Testis (tissue), 5 donors: ENCODE measurements at regions of chr18 and their contacts with region 1.

Region 1: GRCh38 chr18:48663931-48664847 is 125.4 kb downstream of the CTIF start:
- DNase-seq: peak; percentile 79
- H3K4me3 ChIP-seq: no peak overlapping the region
- H3K27ac ChIP-seq: no peak overlapping the region
- H3K4me1 ChIP-seq: peaks cover 13% of the 10 kb centered on the region
- H3K27me3 ChIP-seq: no peaks in the 10 kb centered on the region
- CTCF ChIP-seq: peak; percentile 82 to 88 (median 82)
- POLR2A ChIP-seq: no peak

Region 2: DNA sequence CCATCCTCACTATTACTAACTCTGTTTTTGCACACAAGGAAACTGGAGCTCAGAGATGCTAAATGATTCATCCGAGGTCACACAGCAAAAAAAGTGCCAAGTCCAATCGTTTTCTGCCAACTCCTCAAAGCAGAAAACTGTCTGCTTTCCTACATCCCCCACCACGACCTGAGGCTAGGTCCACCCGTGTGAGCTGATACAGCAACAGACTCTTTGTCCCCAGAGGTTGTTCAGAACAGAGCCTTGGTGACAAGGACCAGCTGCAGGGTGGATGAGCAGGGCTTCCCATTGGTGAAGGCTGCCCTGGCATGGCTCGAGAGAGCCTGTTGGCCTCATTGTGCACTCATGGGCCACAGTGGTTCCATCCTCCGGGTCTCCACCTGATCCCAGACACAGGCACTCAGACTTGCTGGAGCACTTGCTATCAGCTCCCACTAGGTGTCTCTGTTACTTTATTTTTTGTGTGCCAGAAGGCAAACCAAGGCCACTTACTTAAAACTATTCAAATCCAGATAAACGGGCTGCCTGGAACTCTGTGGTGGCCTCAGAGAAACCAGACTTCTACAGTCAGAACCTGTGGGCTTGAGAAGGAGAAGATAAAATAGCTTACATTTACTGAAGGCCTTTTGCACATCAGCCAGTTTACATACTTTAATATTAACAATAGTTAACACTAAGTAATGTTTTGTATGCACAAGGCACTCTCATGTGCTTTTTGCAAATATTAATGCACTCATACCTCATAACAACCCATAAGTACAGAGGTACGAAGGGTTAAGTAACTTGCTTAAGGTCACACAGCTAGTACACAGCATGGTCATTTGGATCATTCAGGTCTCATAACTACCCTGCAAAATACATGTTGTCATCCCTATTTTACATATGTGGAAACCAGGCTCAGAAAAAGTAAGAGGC is 188.3 kb before region 1 on chr18:
- intact Hi-C with region 1: loop called (anchors 5 kb)
- DNase-seq: peak; percentile 67
- H3K4me3 ChIP-seq: no peak overlapping the region
- H3K27ac ChIP-seq: no peak overlapping the region
- H3K4me1 ChIP-seq: peaks cover 6% of the 10 kb centered on the region
- H3K27me3 ChIP-seq: no peaks in the 10 kb centered on the region
- CTCF ChIP-seq: peak; percentile 78 to 85 (median 82)
- POLR2A ChIP-seq: no peak